A549 (cell line): ENCODE measurements at regions of chr14 and their contacts with region 1.

Region 1: DNA sequence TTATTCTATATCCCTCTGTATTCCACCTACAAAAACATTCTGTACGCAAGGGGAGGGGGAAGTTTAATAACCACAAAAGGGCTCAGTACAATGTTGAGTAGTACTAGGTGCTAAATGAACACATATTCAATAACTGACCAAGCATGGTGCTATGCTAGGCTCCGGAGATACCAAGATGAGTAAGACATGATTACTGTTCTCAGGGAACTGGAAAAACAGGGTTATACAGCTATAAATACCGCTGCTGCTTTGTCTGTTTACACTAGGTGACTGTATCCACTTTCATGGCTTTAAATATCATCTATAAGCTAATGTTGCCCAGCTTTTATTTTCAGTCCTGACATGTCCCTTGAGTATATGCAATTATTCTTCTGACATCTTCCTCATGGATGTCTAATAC is 135.8 kb downstream of the INSM2 start:
- DNase-seq: peak in 1 of 2 experiments; percentile 5
- ATAC-seq: 0 out of 6 replicates have a peak, but pooled peaks of 1 of the 2 experiments have one; percentile 25
- H3K4me3 ChIP-seq: no peak overlapping the region
- H3K27ac ChIP-seq: no peak overlapping the region
- H3K4me1 ChIP-seq: no peaks in the 10 kb centered on the region
- CTCF ChIP-seq: no peak
- EP300 ChIP-seq: no peak
- POLR2A ChIP-seq: no peak
- RAD21 ChIP-seq: no peak

Region 2: GRCh38 chr14:35687335-35687939 is 17.6 kb after region 1 on chr14:
- CTCF ChIA-PET with region 1: interaction called, 12 read pairs
- POLR2A ChIA-PET with region 1: no interaction called
- DNase-seq: peak; percentile 4 to 60
- ATAC-seq: peak; percentile 70 to 85; a peak in 5 of 6 replicates
- H3K4me3 ChIP-seq: no peak overlapping the region
- H3K27ac ChIP-seq: no peak overlapping the region
- H3K4me1 ChIP-seq: no peaks in the 10 kb centered on the region
- CTCF ChIP-seq: peak; percentile 87
- EP300 ChIP-seq: no peak
- POLR2A ChIP-seq: no peak
- RAD21 ChIP-seq: peak; percentile 87 to 93

Region 3: DNA sequence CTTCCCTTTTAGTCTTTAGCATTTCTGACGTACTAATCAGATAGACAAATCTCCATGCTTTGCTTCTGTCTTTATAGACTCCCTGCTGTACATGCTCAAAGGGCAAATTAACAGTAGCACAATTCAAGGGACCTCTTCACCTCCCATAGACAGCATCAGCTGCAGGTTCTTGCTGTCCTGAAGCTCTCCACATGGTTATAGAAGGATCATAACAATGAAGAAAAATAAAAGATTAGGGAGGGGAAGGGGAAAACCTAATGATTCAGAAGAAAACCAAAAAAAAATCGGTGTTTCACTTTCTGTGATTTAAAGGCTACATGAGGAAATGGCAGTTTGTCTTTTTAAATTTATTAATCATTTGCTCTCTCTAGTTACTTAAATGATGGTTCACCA is 351.2 kb after region 1 on chr14:
- CTCF ChIA-PET with region 1: no interaction called
- POLR2A ChIA-PET with region 1: no interaction called
- DNase-seq: no peak
- ATAC-seq: no peak
- H3K4me3 ChIP-seq: no peak overlapping the region
- H3K27ac ChIP-seq: no peak overlapping the region
- H3K4me1 ChIP-seq: no peaks in the 10 kb centered on the region
- CTCF ChIP-seq: no peak
- EP300 ChIP-seq: no peak
- POLR2A ChIP-seq: no peak
- RAD21 ChIP-seq: no peak